A673 (cell line): ENCODE measurements at regions of chr5 and their contacts with region 1.

Region 1: DNA sequence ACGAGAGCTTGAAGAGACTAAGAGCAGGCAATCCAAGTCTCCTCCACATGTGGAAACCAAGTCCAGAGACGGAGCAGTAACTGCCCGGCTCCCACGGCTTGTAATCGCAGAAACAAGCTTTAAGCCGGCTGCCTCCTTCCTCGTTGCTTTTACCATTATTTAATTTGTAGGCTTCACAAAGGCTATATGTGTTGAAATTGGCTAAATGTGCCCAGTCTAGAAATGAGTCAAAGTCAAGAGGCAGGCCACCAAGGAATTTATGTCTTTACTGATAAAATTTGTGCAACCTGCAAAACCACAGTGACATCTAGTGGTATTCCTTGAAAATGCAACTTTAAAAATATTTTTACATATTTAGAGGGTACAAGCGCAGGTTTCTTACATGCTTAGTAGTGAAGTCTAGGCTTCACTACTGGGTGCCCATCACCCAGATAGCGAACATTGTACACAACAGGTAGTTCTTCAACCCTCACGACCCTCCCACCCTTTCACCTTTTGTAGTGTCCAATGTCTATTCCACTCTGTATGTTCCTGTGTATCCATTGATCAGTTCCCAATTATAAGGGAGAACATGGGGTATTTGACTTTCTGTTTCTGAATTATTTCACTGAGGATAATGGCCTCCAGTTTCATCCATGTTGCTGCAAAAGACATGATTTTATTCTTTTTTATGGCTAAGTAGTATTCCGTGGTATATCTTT is 33.5 kb upstream of the EBF1 start:
- DNase-seq: peak; percentile 60
- H3K4me3 ChIP-seq: no peak overlapping the region
- H3K27ac ChIP-seq: no peak overlapping the region
- H3K4me1 ChIP-seq: no peaks in the 10 kb centered on the region
- H3K27me3 ChIP-seq: no peaks in the 10 kb centered on the region
- CTCF ChIP-seq: peak; percentile 67

Region 2: GRCh38 chr5:157761690-157762621 is 1371.2 kb before region 1 on chr5:
- CTCF ChIA-PET with region 1: no interaction called
- POLR2A ChIA-PET with region 1: no interaction called
- intact Hi-C with region 1: loop called (anchors 10 kb)
- DNase-seq: peak; percentile 72
- H3K4me3 ChIP-seq: no peak overlapping the region
- H3K27ac ChIP-seq: no peak overlapping the region
- H3K4me1 ChIP-seq: no peaks in the 10 kb centered on the region
- H3K27me3 ChIP-seq: no peaks in the 10 kb centered on the region
- CTCF ChIP-seq: peak; percentile 73

Region 3: GRCh38 chr5:158013939-158014338 is 1119.3 kb before region 1 on chr5:
- CTCF ChIA-PET with region 1: no interaction called
- POLR2A ChIA-PET with region 1: no interaction called
- intact Hi-C with region 1: loop called (anchors 5 kb)
- DNase-seq: peak; percentile 50
- H3K4me3 ChIP-seq: no peak overlapping the region
- H3K27ac ChIP-seq: no peak overlapping the region
- H3K4me1 ChIP-seq: no peaks in the 10 kb centered on the region
- H3K27me3 ChIP-seq: no peaks in the 10 kb centered on the region
- CTCF ChIP-seq: peak; percentile 64

Region 4: GRCh38 chr5:158074992-158075769 is 1058.0 kb before region 1 on chr5:
- CTCF ChIA-PET with region 1: no interaction called
- POLR2A ChIA-PET with region 1: no interaction called
- intact Hi-C with region 1: loop called (anchors 5 kb)
- DNase-seq: peak; percentile 63
- H3K4me3 ChIP-seq: no peak overlapping the region
- H3K27ac ChIP-seq: no peak overlapping the region
- H3K4me1 ChIP-seq: no peaks in the 10 kb centered on the region
- H3K27me3 ChIP-seq: no peaks in the 10 kb centered on the region
- CTCF ChIP-seq: peak; percentile 79

Region 5: DNA sequence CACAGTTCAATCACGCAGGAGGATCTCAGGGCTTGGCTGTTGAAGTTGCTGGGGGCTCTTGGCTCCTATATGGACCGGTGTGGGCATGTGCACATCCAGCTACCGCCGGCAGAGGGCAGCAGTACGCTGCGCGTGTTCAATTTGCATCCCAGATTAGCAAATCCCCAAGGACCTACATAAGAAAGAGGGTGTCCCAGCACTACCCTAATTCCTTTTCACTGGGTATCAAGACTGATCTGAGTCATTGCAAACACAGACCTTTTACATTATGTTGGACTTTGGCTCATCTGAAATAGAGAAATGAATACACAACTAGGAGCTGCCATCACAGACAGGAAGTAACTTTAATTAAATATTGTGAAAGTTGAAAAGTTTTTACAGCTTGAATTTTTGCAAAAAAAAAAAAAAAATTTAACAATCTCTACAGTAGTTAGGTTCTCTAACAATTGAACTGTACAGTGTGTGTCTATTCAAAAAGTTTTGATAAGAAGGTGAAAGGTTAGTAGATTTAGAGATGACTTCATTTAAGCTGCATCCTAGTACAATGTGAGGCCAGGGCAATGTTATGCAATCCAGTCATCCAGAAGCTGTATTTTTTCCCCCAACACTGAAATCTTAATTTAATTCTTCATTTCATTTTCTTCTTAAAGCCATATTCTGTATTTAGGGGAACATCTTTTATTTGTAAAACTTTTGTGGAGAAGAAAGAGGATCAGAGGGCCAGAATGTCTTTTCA is 437.4 kb before region 1 on chr5:
- CTCF ChIA-PET with region 1: interaction called, 3 read pairs
- POLR2A ChIA-PET with region 1: no interaction called
- intact Hi-C with region 1: loop called (anchors 10 kb)
- DNase-seq: peak; percentile 81
- H3K4me3 ChIP-seq: no peak overlapping the region
- H3K27ac ChIP-seq: no peak overlapping the region
- H3K4me1 ChIP-seq: no peaks in the 10 kb centered on the region
- H3K27me3 ChIP-seq: no peaks in the 10 kb centered on the region
- CTCF ChIP-seq: peak; percentile 94

Region 6: DNA sequence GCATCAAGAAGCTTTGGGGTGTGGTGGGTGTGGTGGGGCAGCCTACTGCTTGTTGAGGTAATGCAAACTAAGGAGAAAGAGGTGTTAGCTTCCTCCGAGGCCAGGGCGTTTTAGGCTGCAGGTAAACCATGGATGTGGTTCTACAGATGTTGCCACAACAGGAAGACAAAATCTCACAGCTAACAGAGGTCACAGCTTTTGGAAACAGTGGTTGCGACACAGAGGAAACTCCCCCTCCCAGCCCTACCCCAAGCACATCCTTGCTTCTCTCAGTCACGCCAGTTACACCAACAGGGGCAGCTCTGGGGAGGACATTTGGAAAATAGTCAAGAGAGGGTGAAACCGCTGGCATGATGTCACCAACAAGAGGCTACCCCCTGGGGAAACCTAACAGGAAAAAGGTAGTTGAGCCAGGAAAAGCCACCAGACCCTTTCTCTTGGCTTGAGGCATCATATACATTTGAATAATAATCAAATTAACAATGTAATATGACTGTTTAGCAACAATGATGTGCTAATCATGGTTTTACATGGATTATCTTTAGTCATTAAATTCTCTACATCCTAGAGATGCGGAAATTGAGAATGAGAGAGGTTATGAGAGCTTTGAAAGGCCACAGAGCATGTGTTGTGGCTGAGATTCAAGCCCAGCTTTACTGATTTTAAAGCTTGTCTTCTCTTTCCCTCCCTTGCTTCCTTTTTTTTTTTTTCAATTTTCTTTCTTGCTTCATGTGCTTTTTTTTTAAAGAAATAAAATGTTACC is 279.3 kb after region 1 on chr5:
- CTCF ChIA-PET with region 1: no interaction called
- POLR2A ChIA-PET with region 1: interaction called, 10 read pairs
- intact Hi-C with region 1: no loop called
- DNase-seq: peak; percentile 37
- H3K4me3 ChIP-seq: no peak overlapping the region
- H3K27ac ChIP-seq: no peak overlapping the region
- H3K4me1 ChIP-seq: no peaks in the 10 kb centered on the region
- H3K27me3 ChIP-seq: no peaks in the 10 kb centered on the region
- CTCF ChIP-seq: no peak

Region 7: DNA sequence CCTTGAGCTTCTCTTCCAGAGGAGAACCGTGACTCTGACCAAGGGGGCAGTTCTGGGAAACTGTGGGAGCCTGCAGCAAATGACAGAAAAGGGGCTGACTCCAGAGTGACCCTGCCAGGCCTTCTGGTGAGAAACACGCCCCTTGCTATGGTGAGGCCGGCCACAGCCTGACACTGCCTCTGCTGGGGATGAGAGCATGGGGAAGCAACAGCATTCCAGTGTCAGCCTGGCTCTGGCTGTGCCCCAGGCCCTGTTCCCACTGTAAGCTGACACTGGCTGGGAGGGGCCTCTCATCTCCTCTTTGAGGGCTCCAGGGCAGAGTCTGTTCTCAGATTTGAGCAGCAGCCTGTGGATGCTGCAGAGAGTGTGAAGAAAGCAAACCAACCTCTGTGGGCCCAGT is 377.1 kb after region 1 on chr5:
- CTCF ChIA-PET with region 1: no interaction called
- POLR2A ChIA-PET with region 1: no interaction called
- intact Hi-C with region 1: no loop called
- DNase-seq: no peak
- H3K4me3 ChIP-seq: no peak overlapping the region
- H3K27ac ChIP-seq: no peak overlapping the region
- H3K4me1 ChIP-seq: no peaks in the 10 kb centered on the region
- H3K27me3 ChIP-seq: no peaks in the 10 kb centered on the region
- CTCF ChIP-seq: no peak